ENCODE measurements at regions of chr3 and their contacts with region 1.

Region 1: DNA sequence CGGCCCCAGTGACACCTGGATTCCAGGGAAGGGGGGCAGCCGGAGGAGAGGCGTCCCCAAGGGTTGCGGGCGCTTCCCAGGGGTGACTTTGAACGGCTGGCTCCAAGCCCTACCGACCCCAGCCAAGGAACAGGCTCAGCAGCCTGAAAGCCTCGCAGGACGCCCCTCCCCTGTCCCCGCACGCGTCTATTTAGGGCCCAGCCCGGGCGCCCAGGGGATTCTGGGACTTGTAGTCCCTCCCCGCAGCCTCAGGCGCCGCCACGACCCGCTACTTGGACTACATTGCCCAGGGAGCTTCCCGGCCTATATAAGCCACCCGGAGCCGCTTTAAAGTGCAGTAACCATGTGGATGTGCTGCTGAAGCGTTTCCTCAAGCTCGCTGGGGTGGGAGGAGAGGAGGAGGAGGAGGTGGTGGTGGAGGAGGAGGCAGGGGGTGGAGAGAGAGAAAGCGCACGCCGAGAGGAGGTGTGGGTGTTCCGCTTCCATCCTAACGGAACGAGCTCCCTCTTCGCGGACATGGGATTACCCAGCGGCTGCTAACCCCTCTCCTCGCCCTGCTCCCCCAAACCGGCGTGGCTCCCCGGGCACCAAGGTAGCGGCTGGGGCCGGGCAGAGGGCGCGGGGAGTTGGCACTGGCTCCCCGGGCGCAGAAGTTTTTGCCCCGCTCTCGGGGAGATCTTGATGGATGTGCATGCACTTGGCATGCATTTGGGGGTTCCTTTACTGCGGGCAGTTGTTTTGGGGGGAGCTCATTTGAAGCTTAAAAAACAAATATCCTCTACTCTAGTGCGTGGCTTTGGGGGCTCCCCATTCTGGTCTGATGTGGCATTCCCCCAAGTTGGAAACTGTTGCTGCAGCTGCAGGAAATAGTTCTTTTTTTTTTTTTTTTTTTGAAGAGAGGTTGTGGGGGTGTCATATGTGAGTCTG is at the start of gene ITPR1:
- DNase-seq: peak; percentile 91 to 99 (median 98)
- ATAC-seq: peak; percentile 95
- H3K4me3 ChIP-seq: peak within 1 kb of the TSS; percentile 84
- H3K4me3 Mint-ChIP-seq: peak within 1 kb of the TSS; percentile 93 to 98 (median 96)
- H3K27ac ChIP-seq: peak within 1 kb of the TSS; percentile 89
- H3K27ac Mint-ChIP-seq: peak within 1 kb of the TSS; percentile 86 to 96 (median 90)
- H3K4me1 ChIP-seq: peaks cover 14 to 17% of the 10 kb centered on the region in 2 donors
- H3K4me1 Mint-ChIP-seq: peaks cover 36 to 57% (median 41%) of the 10 kb centered on the region in 7 donors
- H3K27me3 ChIP-seq: no peaks in the 10 kb centered on the region
- H3K27me3 Mint-ChIP-seq: peaks cover 0 to 40% (median 0%) of the 10 kb centered on the region in 5 donors
- total RNA-seq, gene ITPR1: 66.7 to 118 (median 90.7) TPM

Region 2: GRCh38 chr3:3126477-3127431 is 1366.5 kb before region 1 on chr3 and contains the start of gene TRNT1:
- CTCF ChIA-PET with region 1: no interaction called
- POLR2A ChIA-PET with region 1: no interaction called
- intact Hi-C with region 1: loop called (anchors 1 kb)
- DNase-seq: peak; percentile 92 to 97 (median 96)
- ATAC-seq: peak; percentile 97
- H3K4me3 ChIP-seq: peak within 1 kb of the TSS; percentile 92
- H3K4me3 Mint-ChIP-seq: peak within 1 kb of the TSS; percentile 94 to 100 (median 96)
- H3K27ac ChIP-seq: peak within 1 kb of the TSS; percentile 96
- H3K27ac Mint-ChIP-seq: peak within 1 kb of the TSS; percentile 96 to 99 (median 97)
- H3K4me1 ChIP-seq: peaks cover 10 to 25% of the 10 kb centered on the region in 2 donors
- H3K4me1 Mint-ChIP-seq: peaks cover 12 to 48% (median 42%) of the 10 kb centered on the region in 7 donors
- H3K27me3 ChIP-seq: no peaks in the 10 kb centered on the region
- H3K27me3 Mint-ChIP-seq: no peaks in the 10 kb centered on the region
- total RNA-seq, gene TRNT1: 36.4 to 44.5 (median 38.8) TPM

Region 3: DNA sequence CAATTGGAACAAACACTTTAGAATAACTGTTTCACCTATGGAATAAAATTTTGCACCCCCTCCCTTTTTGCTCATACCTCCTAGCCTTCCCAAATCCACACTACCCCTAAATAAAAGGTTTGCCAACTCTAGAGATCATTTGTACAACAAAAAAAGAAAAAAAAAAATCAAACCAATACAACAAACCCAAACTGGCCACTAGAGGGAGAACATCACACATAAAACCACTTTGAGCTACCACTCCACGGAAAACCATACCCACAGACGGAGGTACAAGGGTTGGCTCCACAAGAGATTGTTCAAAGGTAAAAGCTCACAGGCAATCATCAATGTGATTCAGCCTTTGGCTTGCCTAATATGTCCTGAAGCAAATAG is 142.5 kb before region 1 on chr3:
- CTCF ChIA-PET with region 1: interaction called, 4 read pairs
- POLR2A ChIA-PET with region 1: interaction called, 4 read pairs
- intact Hi-C with region 1: loop called (anchors 1 kb)
- DNase-seq: peak in 8 of 9 donors; percentile 46 to 75 (median 66)
- ATAC-seq: peak; percentile 95
- H3K4me3 ChIP-seq: no peak overlapping the region
- H3K4me3 Mint-ChIP-seq: peak overlapping the region; percentile 31 to 85 (median 68)
- H3K27ac ChIP-seq: no peak overlapping the region
- H3K27ac Mint-ChIP-seq: peak overlapping the region in 7 of 9 donors; percentile 1 to 42 (median 16)
- H3K4me1 ChIP-seq: peaks cover 0 to 5% of the 10 kb centered on the region in 2 donors
- H3K4me1 Mint-ChIP-seq: peaks cover 10 to 23% (median 18%) of the 10 kb centered on the region in 7 donors
- H3K27me3 ChIP-seq: no peaks in the 10 kb centered on the region
- H3K27me3 Mint-ChIP-seq: peaks cover 0 to 10% (median 0%) of the 10 kb centered on the region in 5 donors

Region 4: DNA sequence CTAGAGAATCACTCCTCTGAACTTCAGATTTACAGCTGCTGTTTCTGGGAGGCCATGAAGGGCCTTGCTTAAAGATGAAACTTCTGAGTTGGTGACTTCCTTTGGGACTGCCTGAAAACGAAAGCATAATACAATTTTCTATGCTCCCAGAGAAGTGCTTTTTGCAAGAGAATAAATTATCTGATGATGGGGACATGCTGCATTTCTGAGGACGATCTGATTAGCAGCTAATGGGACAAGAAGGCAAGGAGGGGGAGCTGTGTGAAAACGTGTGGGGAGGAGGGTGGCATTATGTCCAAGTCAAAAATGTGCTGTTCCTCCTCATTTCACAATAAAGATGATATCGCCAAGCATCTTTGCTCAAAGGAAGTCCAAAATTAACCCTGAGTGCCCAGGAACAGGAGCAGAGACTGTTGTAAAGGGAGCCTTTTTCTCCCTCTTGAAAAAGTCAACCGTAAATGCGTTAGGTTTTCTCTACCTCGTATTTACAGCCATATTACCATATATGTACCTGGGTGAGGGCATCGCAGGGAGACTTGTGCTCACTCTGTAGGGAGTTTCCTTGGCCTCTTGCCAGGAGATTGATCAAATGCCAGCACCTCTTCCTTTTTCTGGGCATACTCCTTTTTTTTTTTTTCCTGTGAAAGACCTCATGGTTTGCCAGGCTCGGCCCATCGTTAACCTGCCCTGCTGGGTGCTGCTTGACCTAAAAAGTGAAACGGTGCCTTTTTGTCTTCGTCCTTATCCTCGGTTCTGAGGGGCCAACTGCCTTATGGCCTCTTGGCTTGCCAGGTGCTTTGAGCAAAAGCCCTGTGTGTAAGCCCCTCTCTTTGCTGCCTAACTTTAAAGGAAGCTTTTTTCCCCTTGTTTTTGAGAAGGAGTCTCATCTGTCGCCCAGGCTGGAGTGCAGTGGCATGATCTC is 11.3 kb after region 1 on chr3:
- CTCF ChIA-PET with region 1: interaction called, 10 read pairs
- POLR2A ChIA-PET with region 1: interaction called, 96 read pairs
- intact Hi-C with region 1: loop called (anchors 1 kb)
- DNase-seq: peak in 7 of 9 donors; percentile 45 to 67 (median 52)
- ATAC-seq: peak; percentile 79
- H3K4me3 ChIP-seq: peak overlapping the region; percentile 78
- H3K4me3 Mint-ChIP-seq: peak overlapping the region; percentile 81 to 95 (median 89)
- H3K27ac ChIP-seq: peak overlapping the region; percentile 79
- H3K27ac Mint-ChIP-seq: peak overlapping the region; percentile 90 to 96 (median 94)
- H3K4me1 ChIP-seq: peaks cover 18 to 22% of the 10 kb centered on the region in 2 donors
- H3K4me1 Mint-ChIP-seq: peaks cover 44 to 63% (median 57%) of the 10 kb centered on the region in 7 donors
- H3K27me3 ChIP-seq: no peaks in the 10 kb centered on the region
- H3K27me3 Mint-ChIP-seq: no peaks in the 10 kb centered on the region

Region 5: DNA sequence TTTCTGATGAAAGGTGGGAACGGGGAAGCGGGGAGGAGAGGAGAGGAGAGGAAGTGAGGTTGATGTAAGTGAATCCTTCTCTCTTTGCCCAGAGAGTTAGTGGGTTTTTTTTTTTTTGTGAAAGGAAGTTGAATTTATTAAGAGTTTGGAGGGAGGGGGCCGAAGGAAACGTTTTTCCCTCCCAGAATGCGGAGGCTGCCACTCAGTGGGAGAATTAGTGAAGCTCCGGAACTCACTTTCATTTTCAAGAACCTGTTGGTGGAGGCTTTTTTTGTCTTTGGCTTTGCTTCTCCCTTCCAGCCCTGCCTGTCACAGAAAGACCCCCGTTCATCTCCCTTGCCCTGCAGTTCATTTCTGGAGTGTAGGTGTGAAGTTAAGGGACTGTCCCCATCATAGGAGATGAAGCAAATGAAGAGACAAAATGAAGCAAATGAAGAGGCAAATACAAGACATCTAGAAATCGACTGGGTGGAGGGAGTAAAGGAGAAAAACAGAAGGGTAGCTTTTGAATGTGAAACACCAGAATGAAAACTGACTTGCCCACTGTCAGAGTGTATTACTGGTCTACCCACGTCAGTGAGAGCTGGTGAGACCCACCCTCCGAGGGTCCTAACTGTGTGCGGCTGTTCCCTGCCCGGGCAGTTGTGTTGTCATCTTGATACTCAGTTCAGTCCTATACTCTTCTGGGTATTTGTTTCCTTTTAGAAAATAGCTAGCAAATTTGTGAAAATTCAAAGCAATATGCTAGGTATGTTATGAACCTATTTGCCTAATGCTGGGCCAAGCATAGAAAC is 91.4 kb after region 1 on chr3:
- CTCF ChIA-PET with region 1: interaction called, 3 read pairs
- POLR2A ChIA-PET with region 1: interaction called, 6 read pairs
- intact Hi-C with region 1: loop called in 1 of 2 experiments (anchors 2 kb)
- DNase-seq: peak in 6 of 9 donors; percentile 6 to 36 (median 26)
- ATAC-seq: peak; percentile 49
- H3K4me3 ChIP-seq: peak overlapping the region; percentile 38
- H3K4me3 Mint-ChIP-seq: peak overlapping the region; percentile 73 to 91 (median 86)
- H3K27ac ChIP-seq: peak overlapping the region; percentile 40
- H3K27ac Mint-ChIP-seq: peak overlapping the region; percentile 77 to 96 (median 85)
- H3K4me1 ChIP-seq: peaks cover 35 to 38% of the 10 kb centered on the region in 2 donors
- H3K4me1 Mint-ChIP-seq: peaks cover 29 to 90% (median 79%) of the 10 kb centered on the region in 7 donors
- H3K27me3 ChIP-seq: no peaks in the 10 kb centered on the region
- H3K27me3 Mint-ChIP-seq: no peaks in the 10 kb centered on the region

Region 6: GRCh38 chr3:4978204-4978965 is 485.1 kb after region 1 on chr3:
- CTCF ChIA-PET with region 1: no interaction called
- POLR2A ChIA-PET with region 1: interaction called, 3 read pairs
- intact Hi-C with region 1: loop called (anchors 1 to 10 kb)
- DNase-seq: peak in 7 of 9 donors; percentile 29 to 66 (median 36)
- ATAC-seq: peak; percentile 65
- H3K4me3 ChIP-seq: peak overlapping the region; percentile 71
- H3K4me3 Mint-ChIP-seq: peak overlapping the region; percentile 86 to 100 (median 92)
- H3K27ac ChIP-seq: peak overlapping the region; percentile 59
- H3K27ac Mint-ChIP-seq: peak overlapping the region; percentile 52 to 100 (median 89)
- H3K4me1 ChIP-seq: peaks cover 17 to 38% of the 10 kb centered on the region in 2 donors
- H3K4me1 Mint-ChIP-seq: peaks cover 29 to 46% (median 42%) of the 10 kb centered on the region in 7 donors
- H3K27me3 ChIP-seq: no peaks in the 10 kb centered on the region
- H3K27me3 Mint-ChIP-seq: peaks cover 0 to 2% (median 0%) of the 10 kb centered on the region in 5 donors

Region 7: DNA sequence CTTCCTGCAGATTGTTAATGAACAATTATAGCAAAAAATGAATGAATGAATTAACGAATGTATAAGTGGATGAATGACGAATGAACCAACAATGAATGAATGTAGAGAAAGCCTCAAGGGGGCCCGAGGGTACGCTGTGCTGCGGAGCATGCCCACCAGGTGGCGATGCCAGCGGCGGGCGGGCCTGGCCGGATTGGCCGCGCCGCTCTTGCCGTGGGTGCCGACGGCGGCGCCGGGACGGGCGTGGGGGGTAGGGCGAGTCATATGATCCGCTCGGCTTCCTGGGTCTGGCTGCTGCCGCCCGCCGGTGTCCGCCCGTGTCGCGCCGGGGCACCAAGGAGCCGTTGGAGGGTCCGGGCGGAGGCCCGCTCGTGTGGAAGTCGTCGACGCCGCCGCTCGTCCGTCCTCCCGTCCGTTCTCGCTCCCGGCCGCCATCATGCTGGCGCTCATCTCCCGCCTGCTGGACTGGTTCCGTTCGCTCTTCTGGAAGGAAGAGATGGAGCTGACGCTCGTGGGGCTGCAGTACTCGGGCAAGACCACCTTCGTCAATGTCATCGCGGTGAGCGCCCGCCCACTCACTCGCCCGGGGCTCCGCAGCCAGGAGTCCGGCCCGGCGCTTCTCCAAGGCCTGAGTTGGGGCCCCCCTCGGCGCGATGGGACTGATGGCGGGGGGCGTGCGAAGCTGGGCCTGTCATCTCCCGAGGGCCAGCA is 628.9 kb after region 1 on chr3 and contains the start of gene ARL8B:
- CTCF ChIA-PET with region 1: no interaction called
- POLR2A ChIA-PET with region 1: no interaction called
- intact Hi-C with region 1: loop called (anchors 1 kb)
- DNase-seq: peak; percentile 82 to 97 (median 89)
- ATAC-seq: peak; percentile 100
- H3K4me3 ChIP-seq: peak within 1 kb of the TSS; percentile 92
- H3K4me3 Mint-ChIP-seq: peak within 1 kb of the TSS; percentile 81 to 96 (median 88)
- H3K27ac ChIP-seq: peak within 1 kb of the TSS; percentile 88
- H3K27ac Mint-ChIP-seq: peak within 1 kb of the TSS; percentile 79 to 96 (median 88)
- H3K4me1 ChIP-seq: peaks cover 22% of the 10 kb centered on the region in 2 donors
- H3K4me1 Mint-ChIP-seq: peaks cover 25 to 54% (median 47%) of the 10 kb centered on the region in 7 donors
- H3K27me3 ChIP-seq: no peaks in the 10 kb centered on the region
- H3K27me3 Mint-ChIP-seq: no peaks in the 10 kb centered on the region
- total RNA-seq, gene ARL8B: 43.7 to 61.6 (median 48.4) TPM